ENCODE measurements at regions of chr19 and their contacts with region 1.

Region 1: GRCh38 chr19:17766543-17767131 is 15.4 kb downstream of the FCHO1 start:
- DNase-seq: peak; percentile 81

Region 2: GRCh38 chr19:17692566-17692965 is 74.1 kb before region 1 on chr19:
- CTCF ChIA-PET with region 1: interaction called, 11 read pairs
- POLR2A ChIA-PET with region 1: no interaction called
- DNase-seq: no peak

Region 3: DNA sequence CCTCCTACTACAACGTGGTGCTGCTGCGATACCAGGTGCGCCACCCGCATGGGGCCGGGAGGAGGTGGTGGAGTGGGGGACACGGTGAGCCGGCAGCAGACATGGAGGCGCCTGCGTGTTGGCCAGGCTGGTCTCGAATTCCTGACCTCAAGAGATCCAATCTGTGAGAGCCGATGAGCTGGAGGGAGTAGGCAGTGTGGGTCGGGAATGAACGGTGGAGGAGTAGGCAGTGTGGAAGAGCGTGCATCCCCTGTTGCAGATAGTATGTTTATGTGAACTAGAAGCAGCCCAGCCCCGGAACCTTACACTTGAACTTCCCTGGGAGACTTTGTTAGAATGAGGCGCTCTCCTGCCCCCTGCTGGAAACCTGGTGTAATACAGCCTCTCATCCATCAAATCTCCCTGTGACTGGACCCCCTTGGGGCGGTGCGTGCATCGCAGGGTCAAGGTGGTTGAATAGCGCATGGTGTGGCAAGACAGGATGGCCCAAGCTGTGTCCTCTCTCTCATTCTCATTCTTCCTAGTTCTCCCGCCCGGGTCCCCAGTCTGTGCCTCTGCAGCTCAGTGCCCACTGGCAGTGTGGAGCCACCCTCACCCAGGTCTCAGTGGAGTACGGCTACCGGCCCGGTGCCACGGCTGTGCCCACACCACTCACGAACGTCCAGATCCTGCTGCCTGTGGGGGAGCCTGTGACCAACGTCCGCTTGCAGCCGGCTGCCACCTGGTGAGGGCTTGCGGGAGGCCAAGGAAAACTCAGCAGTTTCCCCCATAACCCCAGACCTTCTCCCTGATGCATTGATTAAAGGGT is 17.8 kb after region 1 on chr19:
- CTCF ChIA-PET with region 1: interaction called, 11 read pairs
- POLR2A ChIA-PET with region 1: no interaction called
- DNase-seq: peak; percentile 80

Measured in HEK293T (cell line).